PC-9 (cell line): ENCODE measurements at regions of chr6 and their contacts with region 1.

Region 1: DNA sequence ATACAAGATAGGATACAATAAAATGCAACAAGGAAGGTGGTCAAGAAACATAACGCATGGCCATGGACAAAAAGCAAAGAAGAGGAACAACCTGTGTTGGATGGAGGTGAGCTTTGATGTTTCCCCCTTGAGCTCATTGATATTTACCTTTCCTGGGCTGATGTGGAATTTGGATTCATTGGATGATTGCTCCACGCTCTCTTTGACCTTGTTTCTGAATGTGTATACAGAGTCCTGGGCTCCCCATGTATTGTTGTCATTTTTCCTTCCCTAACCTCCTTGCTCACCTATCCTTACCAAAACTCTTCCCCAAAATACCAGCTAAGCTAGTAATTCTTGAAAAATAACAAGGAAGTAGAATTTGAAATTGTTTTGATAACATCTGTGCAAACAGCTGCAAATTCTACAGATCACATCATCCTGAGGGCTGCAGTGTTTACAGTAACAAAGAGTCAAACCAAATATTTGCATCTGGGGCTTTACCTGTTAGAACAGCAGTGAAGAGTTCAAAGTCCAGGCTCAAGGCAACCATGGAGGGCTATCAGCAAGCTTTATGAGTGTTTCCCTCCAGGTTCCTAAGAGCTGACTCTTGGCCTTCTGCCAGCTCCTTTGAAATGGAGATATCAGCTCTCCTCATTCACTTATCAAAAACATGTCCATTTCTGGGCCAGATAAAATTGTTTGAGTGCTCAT is 214.3 kb upstream of the MARCKS start:
- DNase-seq: peak in 1 of 2 experiments; percentile 80
- H3K4me3 ChIP-seq: no peak overlapping the region
- H3K27ac ChIP-seq: peak overlapping the region; percentile 17; the same call in 1 of the 2 replicates
- H3K4me1 ChIP-seq: peaks cover 37% of the 10 kb centered on the region
- H3K27me3 ChIP-seq: no peaks in the 10 kb centered on the region
- CTCF ChIP-seq: no peak

Region 2: GRCh38 chr6:113447088-113447831 is 195.6 kb before region 1 on chr6:
- CTCF ChIA-PET with region 1: no interaction called
- POLR2A ChIA-PET with region 1: no interaction called
- intact Hi-C with region 1: no loop called
- DNase-seq: peak in 1 of 2 experiments; percentile 77
- H3K4me3 ChIP-seq: no peak overlapping the region; the same call in 1 of the 2 replicates
- H3K27ac ChIP-seq: peak overlapping the region; percentile 34
- H3K4me1 ChIP-seq: peaks cover 23% of the 10 kb centered on the region
- H3K27me3 ChIP-seq: no peaks in the 10 kb centered on the region
- CTCF ChIP-seq: no peak

Region 3: DNA sequence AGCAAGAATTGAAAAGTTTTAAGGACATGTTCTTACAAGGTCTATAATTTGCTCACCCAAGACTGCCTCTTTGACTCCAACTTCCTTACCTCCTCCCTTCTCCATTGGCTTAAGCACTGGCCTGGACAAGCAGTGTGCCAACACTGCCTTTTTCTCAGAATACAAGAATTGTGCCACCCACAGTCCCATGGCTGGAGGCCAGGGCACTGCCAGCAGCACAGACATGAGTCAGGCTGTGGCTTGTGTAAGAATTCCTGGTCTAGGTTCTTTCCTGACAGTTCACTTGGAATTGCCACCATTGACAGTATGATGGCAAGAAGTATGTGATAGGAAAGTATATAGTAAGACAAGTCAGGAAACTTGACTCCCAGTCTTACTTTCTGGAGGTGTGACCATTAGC is 11.5 kb after region 1 on chr6:
- CTCF ChIA-PET with region 1: no interaction called
- POLR2A ChIA-PET with region 1: no interaction called
- intact Hi-C with region 1: loop called (anchors 1 kb)
- DNase-seq: peak; percentile 81 to 95
- H3K4me3 ChIP-seq: 0 out of 2 replicates have a peak overlapping the region, but pooled peaks have one; percentile 20
- H3K27ac ChIP-seq: peak overlapping the region; percentile 75
- H3K4me1 ChIP-seq: peaks cover 27% of the 10 kb centered on the region
- H3K27me3 ChIP-seq: no peaks in the 10 kb centered on the region
- CTCF ChIP-seq: no peak

Region 4: DNA sequence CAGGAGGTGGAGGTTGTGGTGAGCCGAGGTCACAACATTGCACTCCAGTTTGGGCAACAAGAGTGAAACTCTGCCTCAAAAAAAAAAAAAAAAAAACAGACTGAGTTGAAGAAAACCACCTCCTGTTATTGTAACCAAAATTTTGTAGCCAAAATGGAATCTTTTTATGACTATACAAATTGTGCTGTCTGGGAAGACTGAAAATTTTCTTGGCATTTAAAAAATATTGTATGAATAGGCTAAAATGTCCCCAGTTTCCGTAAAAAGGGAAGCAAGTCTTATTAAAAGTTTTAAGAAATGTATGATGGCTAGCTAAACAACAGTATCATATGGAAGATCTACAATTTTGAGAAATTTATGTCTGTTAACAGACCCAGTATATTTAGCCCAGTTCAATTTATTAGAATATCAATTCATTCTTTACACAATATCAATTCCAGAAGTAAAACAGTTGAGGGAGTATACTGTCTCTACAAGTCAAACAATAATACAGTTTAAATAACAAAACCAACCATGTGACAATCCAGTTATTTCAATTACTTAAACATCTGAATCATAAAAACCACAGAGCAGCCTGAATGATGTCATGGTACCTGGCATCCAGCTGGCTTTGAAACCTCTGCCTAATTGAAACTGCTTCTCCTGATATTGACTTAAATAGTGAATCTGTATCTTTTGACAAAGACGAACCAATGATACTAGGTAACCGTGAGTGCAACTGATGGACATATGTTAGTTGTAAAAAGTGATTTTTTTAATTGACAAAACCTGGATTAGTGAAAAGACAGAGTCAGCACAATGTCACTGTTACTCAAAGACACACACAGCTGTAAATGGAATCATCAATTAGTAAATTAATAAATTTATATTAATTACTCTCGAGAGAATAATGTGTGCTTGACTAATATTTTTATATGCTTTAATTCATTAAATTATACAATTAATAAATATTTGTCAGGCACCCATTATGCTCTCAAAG is 47.7 kb after region 1 on chr6:
- CTCF ChIA-PET with region 1: no interaction called
- POLR2A ChIA-PET with region 1: interaction called, 13 read pairs
- intact Hi-C with region 1: loop called (anchors 10 kb)
- DNase-seq: peak; percentile 21 to 86
- H3K4me3 ChIP-seq: no peak overlapping the region
- H3K27ac ChIP-seq: no peak overlapping the region
- H3K4me1 ChIP-seq: peaks cover 39% of the 10 kb centered on the region
- H3K27me3 ChIP-seq: no peaks in the 10 kb centered on the region
- CTCF ChIP-seq: no peak